HepG2 (cell line): ENCODE measurements at regions of chr17 and their contacts with region 1.

Region 1: GRCh38 chr17:979538-980405 is at the start of gene NXN:
- DNase-seq: peak; percentile 47
- ATAC-seq: peak; percentile 73
- H3K4me3 ChIP-seq: peak within 1 kb of the TSS; percentile 67 to 85 (median 80)
- H3K27ac ChIP-seq: peak within 1 kb of the TSS; percentile 71
- H3K4me1 ChIP-seq: peaks cover 57% of the 10 kb centered on the region
- H3K27me3 ChIP-seq: no peaks in the 10 kb centered on the region
- CTCF ChIP-seq: peak; percentile 53
- EP300 ChIP-seq: no peak
- POLR2A ChIP-seq: peak; percentile 44 to 86
- RAD21 ChIP-seq: peak; percentile 75
- total RNA-seq, gene NXN: 21.3 and 22.2 TPM in 2 replicates

Region 2: GRCh38 chr17:781805-782731 is 197.7 kb before region 1 on chr17 and contains the starts of genes GLOD4 and MRM3:
- CTCF ChIA-PET with region 1: no interaction called
- POLR2A ChIA-PET with region 1: interaction called, 27 read pairs
- in situ Hi-C with region 1: loop called (anchors 5 kb)
- intact Hi-C with region 1: no loop called
- DNase-seq: peak; percentile 73
- ATAC-seq: peak; percentile 93
- H3K4me3 ChIP-seq: peak within 1 kb of the TSS; percentile 84 to 99 (median 97)
- H3K27ac ChIP-seq: peak within 1 kb of the TSS; percentile 82
- H3K4me1 ChIP-seq: peaks cover 25% of the 10 kb centered on the region
- H3K27me3 ChIP-seq: no peaks in the 10 kb centered on the region; a peak in 1 of 5 replicates
- CTCF ChIP-seq: peak; percentile 60
- EP300 ChIP-seq: peak in 1 of 2 experiments; percentile 10; a peak in 1 of 4 replicates
- POLR2A ChIP-seq: peak; percentile 83 to 96
- RAD21 ChIP-seq: no peak; the same call in 1 of the 2 replicates
- total RNA-seq, gene GLOD4: 87.8 and 112 TPM in 2 replicates
- total RNA-seq, gene MRM3: 25.5 and 30.3 TPM in 2 replicates

Region 3: GRCh38 chr17:823501-823902 is 156.3 kb before region 1 on chr17:
- CTCF ChIA-PET with region 1: no interaction called
- POLR2A ChIA-PET with region 1: no interaction called
- in situ Hi-C with region 1: no loop called
- intact Hi-C with region 1: no loop called
- DNase-seq: no peak
- ATAC-seq: no peak
- H3K4me3 ChIP-seq: no peak overlapping the region
- H3K27ac ChIP-seq: no peak overlapping the region
- H3K4me1 ChIP-seq: no peaks in the 10 kb centered on the region
- H3K27me3 ChIP-seq: no peaks in the 10 kb centered on the region
- CTCF ChIP-seq: no peak
- EP300 ChIP-seq: no peak
- POLR2A ChIP-seq: no peak
- RAD21 ChIP-seq: no peak

Region 4: GRCh38 chr17:879549-880442 is 100.0 kb before region 1 on chr17:
- CTCF ChIA-PET with region 1: interaction called, 13 read pairs
- POLR2A ChIA-PET with region 1: interaction called, 11 read pairs
- in situ Hi-C with region 1: loop called (anchors 5 kb)
- intact Hi-C with region 1: no loop called
- DNase-seq: peak; percentile 45
- ATAC-seq: no peak
- H3K4me3 ChIP-seq: no peak overlapping the region
- H3K27ac ChIP-seq: no peak overlapping the region
- H3K4me1 ChIP-seq: peaks cover 24% of the 10 kb centered on the region
- H3K27me3 ChIP-seq: no peaks in the 10 kb centered on the region
- CTCF ChIP-seq: peak; percentile 50
- EP300 ChIP-seq: no peak
- POLR2A ChIP-seq: no peak
- RAD21 ChIP-seq: 0 out of 2 replicates have a peak, but pooled peaks have one; percentile 12

Region 5: GRCh38 chr17:933312-934083 is 46.3 kb before region 1 on chr17:
- CTCF ChIA-PET with region 1: no interaction called
- POLR2A ChIA-PET with region 1: interaction called, 11 read pairs
- in situ Hi-C with region 1: no loop called
- intact Hi-C with region 1: loop called (anchors 5 kb)
- DNase-seq: peak; percentile 75
- ATAC-seq: no peak
- H3K4me3 ChIP-seq: no peak overlapping the region; a peak in 1 of 6 replicates
- H3K27ac ChIP-seq: no peak overlapping the region
- H3K4me1 ChIP-seq: peaks cover 96% of the 10 kb centered on the region
- H3K27me3 ChIP-seq: no peaks in the 10 kb centered on the region
- CTCF ChIP-seq: no peak
- EP300 ChIP-seq: no peak; a peak in 1 of 4 replicates
- POLR2A ChIP-seq: no peak
- RAD21 ChIP-seq: no peak

Region 6: GRCh38 chr17:996554-997344 is 17.0 kb after region 1 on chr17 and contains the start of gene TIMM22:
- CTCF ChIA-PET with region 1: no interaction called
- POLR2A ChIA-PET with region 1: interaction called, 26 read pairs
- in situ Hi-C with region 1: no loop called
- intact Hi-C with region 1: no loop called
- DNase-seq: peak; percentile 96
- ATAC-seq: peak; percentile 95
- H3K4me3 ChIP-seq: peak within 1 kb of the TSS; percentile 89 to 100 (median 98)
- H3K27ac ChIP-seq: peak within 1 kb of the TSS; percentile 91
- H3K4me1 ChIP-seq: peaks cover 48% of the 10 kb centered on the region
- H3K27me3 ChIP-seq: no peaks in the 10 kb centered on the region
- CTCF ChIP-seq: peak; percentile 99
- EP300 ChIP-seq: peak; percentile 36 to 81; a peak in 3 of 4 replicates
- POLR2A ChIP-seq: peak; percentile 84 to 88
- RAD21 ChIP-seq: peak; percentile 98
- total RNA-seq, gene TIMM22: 15.5 and 16.3 TPM in 2 replicates

Region 7: DNA sequence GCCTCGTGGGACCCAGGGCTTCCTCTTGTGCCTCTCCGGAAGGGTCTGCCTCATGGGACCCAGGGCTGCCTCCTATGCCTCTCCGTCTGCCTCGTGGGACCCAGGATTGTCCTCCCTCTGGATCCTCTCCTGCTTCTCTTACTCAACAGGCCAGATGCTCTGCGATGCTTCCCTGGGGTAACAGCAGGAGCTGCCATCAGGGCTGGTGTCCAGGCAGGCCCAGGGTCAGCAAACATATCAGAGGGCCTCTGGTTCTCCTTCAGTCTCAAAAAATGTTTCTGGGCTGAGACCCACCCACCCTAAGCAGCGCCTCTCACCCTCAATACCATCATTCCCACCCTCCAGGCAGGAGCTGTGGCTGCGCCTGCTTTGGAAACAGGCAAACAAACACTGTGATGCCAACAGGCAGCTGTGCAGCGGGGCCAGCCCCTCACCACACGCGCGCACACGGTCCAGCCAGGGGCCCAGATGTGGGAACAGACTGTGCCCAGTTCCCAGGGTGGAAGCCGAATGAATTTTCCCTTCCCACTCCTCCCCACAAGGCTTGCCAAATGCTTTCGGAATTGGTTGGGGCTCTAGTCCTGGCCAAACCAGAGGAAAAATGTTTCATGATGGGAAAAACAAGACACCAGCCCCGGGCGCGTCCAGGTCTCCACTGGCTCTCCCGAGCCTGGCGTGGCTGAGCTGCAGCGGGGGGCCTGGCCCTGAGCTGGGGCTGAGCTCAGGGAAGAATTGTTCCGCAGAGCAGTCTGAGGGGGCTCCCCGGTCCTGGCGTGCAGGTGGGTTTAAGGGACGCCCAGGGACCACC is 28.4 kb after region 1 on chr17:
- CTCF ChIA-PET with region 1: no interaction called
- POLR2A ChIA-PET with region 1: no interaction called
- in situ Hi-C with region 1: no loop called
- intact Hi-C with region 1: no loop called
- DNase-seq: no peak
- ATAC-seq: no peak
- H3K4me3 ChIP-seq: no peak overlapping the region
- H3K27ac ChIP-seq: no peak overlapping the region
- H3K4me1 ChIP-seq: peaks cover 6% of the 10 kb centered on the region; the same call in 1 of the 2 replicates
- H3K27me3 ChIP-seq: no peaks in the 10 kb centered on the region
- CTCF ChIP-seq: no peak
- EP300 ChIP-seq: no peak
- POLR2A ChIP-seq: no peak
- RAD21 ChIP-seq: no peak

Region 8: GRCh38 chr17:1047177-1047878 is 67.6 kb after region 1 on chr17:
- CTCF ChIA-PET with region 1: no interaction called
- POLR2A ChIA-PET with region 1: no interaction called
- in situ Hi-C with region 1: no loop called
- intact Hi-C with region 1: no loop called
- DNase-seq: no peak
- ATAC-seq: no peak
- H3K4me3 ChIP-seq: no peak overlapping the region
- H3K27ac ChIP-seq: no peak overlapping the region
- H3K4me1 ChIP-seq: no peaks in the 10 kb centered on the region
- H3K27me3 ChIP-seq: no peaks in the 10 kb centered on the region
- CTCF ChIP-seq: no peak
- EP300 ChIP-seq: no peak
- POLR2A ChIP-seq: no peak
- RAD21 ChIP-seq: no peak